CD4-positive, alpha-beta T cell (primary cell): ENCODE measurements at regions of chr4 and their contacts with region 1.

Region 1: GRCh38 chr4:68375667-68376559 is 26.0 kb upstream of the YTHDC1 start:
- DNase-seq: peak in 13 of 14 experiments; percentile 3 to 82 (median 41)
- ATAC-seq: peak; percentile 85
- H3K4me3 ChIP-seq: peak overlapping the region; percentile 30
- H3K4me3 Mint-ChIP-seq: peak overlapping the region; percentile 76
- H3K27ac ChIP-seq: no peak overlapping the region
- H3K27ac Mint-ChIP-seq: no peak overlapping the region
- H3K4me1 ChIP-seq: peaks cover 7% of the 10 kb centered on the region
- H3K4me1 Mint-ChIP-seq: peaks cover 13% of the 10 kb centered on the region
- H3K27me3 ChIP-seq: no peaks in the 10 kb centered on the region
- H3K27me3 Mint-ChIP-seq: peaks cover 17% of the 10 kb centered on the region
- CTCF ChIP-seq: peak; percentile 84

Region 2: DNA sequence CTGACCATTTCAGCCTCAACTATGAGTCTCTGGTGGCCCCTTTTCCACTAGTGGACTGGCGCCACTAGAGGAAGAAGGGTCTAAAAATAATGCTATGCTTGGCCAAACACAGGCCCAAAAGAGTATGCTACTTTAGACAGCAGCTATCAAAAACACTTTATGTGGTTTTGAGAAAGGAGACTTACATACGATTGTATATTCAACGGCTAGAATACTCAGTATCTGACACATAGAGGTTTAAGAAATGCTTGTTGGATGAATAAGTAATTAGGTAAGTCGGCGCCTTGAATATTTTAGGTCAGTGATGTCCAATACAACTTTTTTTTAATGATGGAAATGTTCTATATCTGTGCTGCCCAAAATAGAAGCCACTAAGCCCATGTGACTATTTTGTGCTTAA is 386.9 kb before region 1 on chr4:
- CTCF ChIA-PET with region 1: no interaction called
- POLR2A ChIA-PET with region 1: no interaction called
- intact Hi-C with region 1: loop called in 1 of 2 experiments (anchors 5 kb)
- DNase-seq: no peak
- ATAC-seq: no peak
- H3K4me3 ChIP-seq: no peak overlapping the region
- H3K4me3 Mint-ChIP-seq: no peak overlapping the region
- H3K27ac ChIP-seq: no peak overlapping the region
- H3K27ac Mint-ChIP-seq: no peak overlapping the region
- H3K4me1 ChIP-seq: no peaks in the 10 kb centered on the region
- H3K4me1 Mint-ChIP-seq: peaks cover 7% of the 10 kb centered on the region
- H3K27me3 ChIP-seq: peaks cover 0 to 4% of the 10 kb centered on the region in 2 experiments
- H3K27me3 Mint-ChIP-seq: no peaks in the 10 kb centered on the region
- CTCF ChIP-seq: no peak

Region 3: GRCh38 chr4:68271851-68272756 is 103.8 kb before region 1 on chr4:
- CTCF ChIA-PET with region 1: interaction called, 12 read pairs
- POLR2A ChIA-PET with region 1: interaction called, 6 read pairs
- intact Hi-C with region 1: loop called (anchors 1 kb)
- DNase-seq: peak in 3 of 14 experiments; percentile 55 to 61 (median 56)
- ATAC-seq: peak; percentile 56
- H3K4me3 ChIP-seq: no peak overlapping the region
- H3K4me3 Mint-ChIP-seq: peak overlapping the region; percentile 31
- H3K27ac ChIP-seq: no peak overlapping the region
- H3K27ac Mint-ChIP-seq: no peak overlapping the region
- H3K4me1 ChIP-seq: no peaks in the 10 kb centered on the region
- H3K4me1 Mint-ChIP-seq: peaks cover 3% of the 10 kb centered on the region
- H3K27me3 ChIP-seq: peaks cover 0 to 4% of the 10 kb centered on the region in 2 experiments
- H3K27me3 Mint-ChIP-seq: peaks cover 17% of the 10 kb centered on the region
- CTCF ChIP-seq: peak; percentile 85

Region 4: GRCh38 chr4:68342134-68342533 is 33.8 kb before region 1 on chr4:
- CTCF ChIA-PET with region 1: interaction called, 6 read pairs
- POLR2A ChIA-PET with region 1: no interaction called
- intact Hi-C with region 1: loop called (anchors 5 kb)
- DNase-seq: no peak
- ATAC-seq: peak; percentile 24
- H3K4me3 ChIP-seq: no peak overlapping the region
- H3K4me3 Mint-ChIP-seq: peak overlapping the region; percentile 55
- H3K27ac ChIP-seq: no peak overlapping the region
- H3K27ac Mint-ChIP-seq: peak overlapping the region; percentile 51
- H3K4me1 ChIP-seq: peaks cover 36% of the 10 kb centered on the region
- H3K4me1 Mint-ChIP-seq: peaks cover 90% of the 10 kb centered on the region
- H3K27me3 ChIP-seq: no peaks in the 10 kb centered on the region
- H3K27me3 Mint-ChIP-seq: no peaks in the 10 kb centered on the region
- CTCF ChIP-seq: no peak

Region 5: DNA sequence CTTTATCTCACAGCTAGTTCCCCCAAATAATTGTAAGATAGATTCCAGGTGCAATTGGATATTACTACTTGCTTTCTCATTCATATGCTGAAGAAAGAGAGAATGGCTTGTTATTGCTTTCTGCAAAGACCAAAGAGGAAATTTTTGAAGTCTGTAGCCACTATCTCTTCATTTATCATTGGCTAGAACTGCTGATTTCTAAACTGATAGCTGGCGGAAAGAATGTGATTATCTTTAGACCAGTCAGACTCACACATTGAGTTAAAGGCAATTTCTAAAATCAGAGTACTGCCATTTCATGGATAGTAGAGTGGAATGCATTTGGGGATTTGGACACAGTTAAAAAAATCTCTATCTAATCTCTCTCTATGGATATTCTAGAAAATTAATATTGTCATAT is 58.9 kb after region 1 on chr4:
- CTCF ChIA-PET with region 1: no interaction called
- POLR2A ChIA-PET with region 1: interaction called, 3 read pairs
- intact Hi-C with region 1: loop called in 1 of 2 experiments (anchors 5 kb)
- DNase-seq: peak in 1 of 14 experiments; percentile 8
- ATAC-seq: no peak
- H3K4me3 ChIP-seq: no peak overlapping the region
- H3K4me3 Mint-ChIP-seq: no peak overlapping the region
- H3K27ac ChIP-seq: no peak overlapping the region
- H3K27ac Mint-ChIP-seq: no peak overlapping the region
- H3K4me1 ChIP-seq: peaks cover 23% of the 10 kb centered on the region
- H3K4me1 Mint-ChIP-seq: peaks cover 37% of the 10 kb centered on the region
- H3K27me3 ChIP-seq: no peaks in the 10 kb centered on the region
- H3K27me3 Mint-ChIP-seq: no peaks in the 10 kb centered on the region
- CTCF ChIP-seq: no peak

Region 6: DNA sequence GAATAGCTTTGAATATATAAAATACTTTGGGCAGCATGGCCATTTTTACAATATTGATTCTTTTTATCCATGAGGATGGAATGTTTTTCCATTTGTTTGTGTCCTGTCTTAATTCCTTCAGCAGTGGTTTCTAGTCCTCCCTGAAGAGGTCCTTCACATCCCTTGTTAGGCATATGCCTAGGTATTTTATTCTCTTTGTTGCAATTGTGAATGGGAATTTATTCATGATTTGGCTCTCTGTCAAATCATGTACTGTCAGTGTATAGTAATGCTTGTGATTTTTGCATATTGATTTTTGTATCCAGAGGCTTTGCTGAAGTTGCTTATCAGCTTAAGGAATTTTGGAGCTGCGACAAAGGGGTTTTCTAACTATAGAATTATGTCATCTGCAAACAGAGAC is 276.0 kb after region 1 on chr4:
- CTCF ChIA-PET with region 1: no interaction called
- POLR2A ChIA-PET with region 1: no interaction called
- intact Hi-C with region 1: no loop called
- DNase-seq: no peak
- ATAC-seq: no peak
- H3K4me3 ChIP-seq: no peak overlapping the region
- H3K4me3 Mint-ChIP-seq: no peak overlapping the region
- H3K27ac ChIP-seq: no peak overlapping the region
- H3K27ac Mint-ChIP-seq: no peak overlapping the region
- H3K4me1 ChIP-seq: no peaks in the 10 kb centered on the region
- H3K4me1 Mint-ChIP-seq: no peaks in the 10 kb centered on the region
- H3K27me3 ChIP-seq: no peaks in the 10 kb centered on the region
- H3K27me3 Mint-ChIP-seq: peaks cover 11% of the 10 kb centered on the region
- CTCF ChIP-seq: no peak